CD4-positive, alpha-beta memory T cell (primary cell): ENCODE measurements at regions of chr9 and their contacts with region 1.

Region 1: GRCh38 chr9:120792898-120793765 is at the start of gene FBXW2:
- DNase-seq: peak; percentile 74 to 83 (median 78)
- H3K4me3 ChIP-seq: peak within 1 kb of the TSS; percentile 82 to 94
- H3K4me3 Mint-ChIP-seq: peak within 1 kb of the TSS; percentile 89 to 98 (median 92)
- H3K27ac ChIP-seq: peak within 1 kb of the TSS; percentile 77
- H3K27ac Mint-ChIP-seq: peak within 1 kb of the TSS; percentile 90 to 97 (median 93)
- H3K4me1 ChIP-seq: peaks cover 58% of the 10 kb centered on the region
- H3K4me1 Mint-ChIP-seq: peaks cover 39 to 62% (median 50%) of the 10 kb centered on the region in 4 donors
- H3K27me3 ChIP-seq: no peaks in the 10 kb centered on the region
- H3K27me3 Mint-ChIP-seq: no peaks in the 10 kb centered on the region
- total RNA-seq, gene FBXW2: 73.7 to 77.8 TPM

Region 2: GRCh38 chr9:120830151-120830550 is 37.0 kb after region 1 on chr9:
- CTCF ChIA-PET with region 1: no interaction called
- POLR2A ChIA-PET with region 1: interaction called, 11 read pairs
- intact Hi-C with region 1: no loop called
- DNase-seq: no peak
- H3K4me3 ChIP-seq: no peak overlapping the region
- H3K4me3 Mint-ChIP-seq: no peak overlapping the region
- H3K27ac ChIP-seq: no peak overlapping the region
- H3K27ac Mint-ChIP-seq: peak overlapping the region in 1 of 7 donors; percentile 72
- H3K4me1 ChIP-seq: no peaks in the 10 kb centered on the region
- H3K4me1 Mint-ChIP-seq: peaks cover 0 to 7% (median 2%) of the 10 kb centered on the region in 4 donors
- H3K27me3 ChIP-seq: no peaks in the 10 kb centered on the region
- H3K27me3 Mint-ChIP-seq: no peaks in the 10 kb centered on the region

Region 3: DNA sequence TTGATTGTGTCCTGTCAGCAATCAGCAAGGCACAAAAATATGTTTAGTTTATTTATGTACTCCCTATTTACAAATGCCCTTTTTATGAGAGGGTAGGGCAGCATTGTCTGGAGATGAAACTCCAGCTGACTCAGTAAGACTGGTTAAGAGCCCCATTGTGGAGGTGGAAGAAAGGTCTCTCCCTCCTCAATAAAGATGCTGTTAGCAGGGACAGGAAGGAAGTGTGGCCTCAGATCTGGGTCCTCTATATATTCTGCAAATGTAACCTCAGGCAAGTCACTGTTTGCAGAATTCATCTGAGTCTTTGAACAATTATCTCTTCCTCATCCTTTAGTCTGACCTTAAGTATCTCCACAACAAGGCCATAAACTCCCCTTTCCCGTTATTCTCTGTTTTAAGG is 181.8 kb after region 1 on chr9:
- CTCF ChIA-PET with region 1: no interaction called
- POLR2A ChIA-PET with region 1: no interaction called
- intact Hi-C with region 1: no loop called
- DNase-seq: peak in 4 of 5 donors; percentile 1 to 19 (median 14)
- H3K4me3 ChIP-seq: no peak overlapping the region
- H3K4me3 Mint-ChIP-seq: peak overlapping the region in 4 of 8 donors; percentile 15 to 38 (median 32)
- H3K27ac ChIP-seq: peak overlapping the region; percentile 7
- H3K27ac Mint-ChIP-seq: peak overlapping the region; percentile 49 to 86 (median 83)
- H3K4me1 ChIP-seq: peaks cover 15% of the 10 kb centered on the region
- H3K4me1 Mint-ChIP-seq: peaks cover 17 to 18% (median 18%) of the 10 kb centered on the region in 4 donors
- H3K27me3 ChIP-seq: no peaks in the 10 kb centered on the region
- H3K27me3 Mint-ChIP-seq: no peaks in the 10 kb centered on the region